ENCODE measurements at regions of chr5 and their contacts with region 1.

Region 1: DNA sequence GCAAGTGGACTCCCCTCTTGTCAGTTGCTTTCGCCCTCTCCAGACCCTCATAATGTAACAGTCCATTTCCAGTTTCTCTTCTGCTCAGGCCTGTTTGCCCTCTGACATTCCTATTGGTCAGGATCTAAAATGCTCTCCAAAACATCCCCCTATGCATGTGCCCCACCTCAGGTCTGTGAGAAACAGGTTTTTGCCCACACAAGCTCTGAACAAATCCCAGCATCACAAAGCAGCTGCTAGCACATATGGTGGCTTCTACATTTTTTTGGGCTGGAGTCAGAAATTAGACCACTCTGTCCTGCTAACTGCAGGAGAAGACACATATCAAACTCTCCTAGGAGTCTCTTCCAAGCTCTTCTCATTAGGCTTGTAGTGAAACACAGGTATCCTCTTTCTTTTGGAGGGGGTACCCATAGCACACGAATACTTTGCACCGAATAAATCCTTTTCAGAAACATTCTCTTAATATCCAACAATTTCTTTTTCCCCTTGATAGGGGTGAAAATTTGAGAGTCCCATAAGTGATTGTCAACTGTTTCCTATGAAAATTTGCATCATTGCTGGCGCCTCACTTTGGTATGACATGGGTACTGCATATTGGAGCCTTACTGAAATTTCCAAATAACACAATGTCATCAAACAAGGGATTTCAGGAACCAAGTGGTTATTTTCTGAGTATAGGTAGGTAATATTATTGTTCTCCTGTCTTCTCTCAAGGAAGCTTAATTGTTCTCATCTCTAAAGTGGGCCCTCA is 19.3 kb upstream of the HSPA9 start:
- DNase-seq: peak in 2 of 3 donors; percentile 28 to 45
- H3K4me3 ChIP-seq: no peak overlapping the region
- H3K27ac ChIP-seq: no peak overlapping the region
- H3K4me1 ChIP-seq: no peaks in the 10 kb centered on the region
- H3K27me3 ChIP-seq: no peaks in the 10 kb centered on the region

Region 2: GRCh38 chr5:138575194-138576015 is 19.1 kb before region 1 on chr5 and contains the start of gene HSPA9:
- CTCF ChIA-PET with region 1: interaction called, 11 read pairs
- POLR2A ChIA-PET with region 1: interaction called, 6 read pairs
- DNase-seq: peak; percentile 99 to 100 (median 99)
- H3K4me3 ChIP-seq: peak within 1 kb of the TSS; percentile 87 to 100 (median 96)
- H3K27ac ChIP-seq: peak within 1 kb of the TSS; percentile 100
- H3K4me1 ChIP-seq: peaks cover 10 to 26% (median 17%) of the 10 kb centered on the region in 4 experiments
- H3K27me3 ChIP-seq: no peaks in the 10 kb centered on the region

Region 3: GRCh38 chr5:138610918-138611677 is 16.6 kb after region 1 on chr5:
- CTCF ChIA-PET with region 1: interaction called, 86 read pairs
- POLR2A ChIA-PET with region 1: no interaction called
- DNase-seq: peak; percentile 30 to 64 (median 57)
- H3K4me3 ChIP-seq: peak overlapping the region; percentile 15 to 77 (median 53)
- H3K27ac ChIP-seq: no peak overlapping the region
- H3K4me1 ChIP-seq: peaks cover 0 to 17% (median 14%) of the 10 kb centered on the region in 4 experiments
- H3K27me3 ChIP-seq: no peaks in the 10 kb centered on the region

Region 4: GRCh38 chr5:138622051-138622450 is 27.6 kb after region 1 on chr5:
- CTCF ChIA-PET with region 1: no interaction called
- POLR2A ChIA-PET with region 1: no interaction called
- DNase-seq: no peak
- H3K4me3 ChIP-seq: no peak overlapping the region
- H3K27ac ChIP-seq: no peak overlapping the region
- H3K4me1 ChIP-seq: no peaks in the 10 kb centered on the region
- H3K27me3 ChIP-seq: no peaks in the 10 kb centered on the region

Measured in common myeloid progenitor, CD34-positive (primary cell).